HepG2 (cell line): ENCODE measurements at regions of chr5 and their contacts with region 1.

Region 1: GRCh38 chr5:82641331-82642003 is 363.3 kb upstream of the RPS23 start:
- DNase-seq: peak; percentile 82
- ATAC-seq: peak; percentile 91
- H3K4me3 ChIP-seq: no peak overlapping the region
- H3K27ac ChIP-seq: no peak overlapping the region
- H3K4me1 ChIP-seq: peaks cover 20% of the 10 kb centered on the region
- H3K27me3 ChIP-seq: no peaks in the 10 kb centered on the region
- CTCF ChIP-seq: peak; percentile 86
- EP300 ChIP-seq: no peak; a peak in 1 of 4 replicates
- POLR2A ChIP-seq: no peak
- RAD21 ChIP-seq: peak; percentile 50; the same call in 1 of the 2 replicates

Region 2: GRCh38 chr5:82512025-82512424 is 129.4 kb before region 1 on chr5:
- CTCF ChIA-PET with region 1: no interaction called
- POLR2A ChIA-PET with region 1: no interaction called
- in situ Hi-C with region 1: no loop called
- intact Hi-C with region 1: no loop called
- DNase-seq: no peak
- ATAC-seq: no peak
- H3K4me3 ChIP-seq: no peak overlapping the region
- H3K27ac ChIP-seq: no peak overlapping the region
- H3K4me1 ChIP-seq: no peaks in the 10 kb centered on the region
- H3K27me3 ChIP-seq: no peaks in the 10 kb centered on the region
- CTCF ChIP-seq: no peak
- EP300 ChIP-seq: no peak
- POLR2A ChIP-seq: no peak
- RAD21 ChIP-seq: no peak

Region 3: DNA sequence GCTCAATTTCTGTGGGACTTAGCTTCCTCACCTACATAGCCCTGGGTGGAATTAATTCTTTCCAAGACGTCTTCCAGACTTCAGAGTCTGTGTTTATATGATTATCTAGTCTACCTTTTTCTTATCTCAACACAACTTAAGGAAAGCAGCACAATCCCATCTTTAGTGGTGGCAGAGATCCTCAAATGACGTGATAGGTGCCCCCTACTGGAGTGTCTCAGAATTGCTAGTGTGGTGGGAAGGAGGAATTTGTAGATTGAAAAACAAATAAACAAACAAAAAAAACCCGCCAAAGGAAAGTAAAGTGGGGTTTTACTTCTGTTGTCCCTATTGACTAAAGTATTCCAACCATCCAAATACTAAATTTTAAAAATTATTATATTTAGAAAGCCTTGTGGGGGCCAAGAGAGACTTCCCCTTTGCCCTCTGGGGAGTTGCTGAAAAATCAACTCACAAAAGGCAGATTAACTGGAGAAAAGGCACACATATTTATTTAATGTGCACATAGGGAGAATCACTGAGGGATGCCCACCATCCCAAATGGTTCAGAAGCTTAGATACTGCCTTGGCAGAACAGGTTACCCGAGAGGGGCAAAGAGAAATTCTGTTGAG is 152.4 kb after region 1 on chr5:
- CTCF ChIA-PET with region 1: no interaction called
- POLR2A ChIA-PET with region 1: no interaction called
- in situ Hi-C with region 1: loop called (anchors 10 kb)
- intact Hi-C with region 1: loop called (anchors 2 kb)
- DNase-seq: peak; percentile 21
- ATAC-seq: no peak
- H3K4me3 ChIP-seq: no peak overlapping the region
- H3K27ac ChIP-seq: no peak overlapping the region
- H3K4me1 ChIP-seq: no peaks in the 10 kb centered on the region
- H3K27me3 ChIP-seq: no peaks in the 10 kb centered on the region
- CTCF ChIP-seq: peak; percentile 60
- EP300 ChIP-seq: no peak
- POLR2A ChIP-seq: no peak
- RAD21 ChIP-seq: no peak

Region 4: DNA sequence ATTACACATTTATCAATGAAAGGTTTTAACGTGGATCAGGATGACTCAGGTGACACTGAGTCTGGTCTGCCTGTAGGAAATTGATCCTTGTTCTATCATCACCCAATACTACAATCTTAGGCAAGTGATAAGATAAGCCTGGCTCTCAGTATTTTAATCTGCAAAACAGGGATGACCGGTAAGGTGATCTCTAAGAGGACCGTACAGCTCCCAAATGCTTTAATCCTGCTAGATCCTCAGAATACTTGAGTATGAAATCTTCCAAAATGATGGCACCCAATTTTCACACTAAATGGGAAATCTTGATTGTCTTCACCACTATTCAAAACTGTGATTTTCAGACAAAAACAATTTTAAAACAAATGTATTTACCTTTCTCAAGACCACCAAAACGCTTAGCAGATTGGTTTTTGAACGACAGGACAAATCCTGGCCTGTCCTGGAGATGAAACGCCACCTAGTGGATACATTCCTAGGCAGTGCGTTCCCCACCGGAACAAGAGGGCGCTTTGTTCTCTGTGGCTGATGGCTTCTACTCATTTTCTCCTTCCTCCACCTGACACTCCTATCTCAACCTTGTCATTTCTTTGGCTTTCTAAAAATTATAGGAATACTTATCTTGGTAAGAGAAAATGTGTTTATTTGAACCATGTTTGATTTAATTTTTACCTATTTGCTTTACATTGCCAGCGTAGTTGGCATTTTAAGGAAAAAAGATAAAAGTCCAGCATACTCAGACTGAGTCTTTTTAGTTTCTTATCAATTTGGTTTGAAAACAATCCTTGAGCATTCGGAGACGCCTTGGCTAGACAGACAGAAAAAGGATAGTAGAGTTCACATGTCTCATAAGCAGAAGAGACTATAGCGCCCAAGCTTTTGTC is 788.9 kb after region 1 on chr5:
- CTCF ChIA-PET with region 1: interaction called, 7 read pairs
- POLR2A ChIA-PET with region 1: no interaction called
- in situ Hi-C with region 1: loop called (anchors 25 kb)
- intact Hi-C with region 1: loop called (anchors 1 kb)
- DNase-seq: peak; percentile 61
- ATAC-seq: peak; percentile 99
- H3K4me3 ChIP-seq: no peak overlapping the region
- H3K27ac ChIP-seq: no peak overlapping the region
- H3K4me1 ChIP-seq: no peaks in the 10 kb centered on the region
- H3K27me3 ChIP-seq: no peaks in the 10 kb centered on the region
- CTCF ChIP-seq: peak; percentile 90
- EP300 ChIP-seq: no peak
- POLR2A ChIP-seq: no peak
- RAD21 ChIP-seq: peak; percentile 66